PC-9 (cell line): ENCODE measurements at regions of chr2 and their contacts with region 1.

Region 1: DNA sequence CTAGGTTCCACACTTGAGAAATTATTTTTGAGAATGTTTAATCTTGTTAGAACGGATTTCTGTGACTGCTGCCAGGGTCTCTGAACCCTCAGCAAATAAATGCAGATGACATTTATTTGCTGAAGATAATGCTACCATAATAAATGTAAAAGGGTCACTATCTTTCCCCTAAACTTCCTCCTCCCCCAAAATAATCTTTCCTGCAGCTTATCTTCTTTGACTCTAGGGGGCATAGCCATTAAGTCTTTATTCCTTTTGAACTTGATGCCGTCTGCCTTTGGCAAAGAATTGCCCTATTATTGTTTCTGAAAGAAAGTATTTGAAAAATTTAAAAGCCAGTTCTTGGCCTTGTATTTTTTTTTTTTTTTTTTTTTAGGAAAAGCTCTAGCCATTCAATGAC is 63.6 kb upstream of the ACSL3 start:
- DNase-seq: peak in 1 of 2 experiments; percentile 68
- H3K4me3 ChIP-seq: no peak overlapping the region
- H3K27ac ChIP-seq: no peak overlapping the region
- H3K4me1 ChIP-seq: peaks cover 18% of the 10 kb centered on the region
- H3K27me3 ChIP-seq: no peaks in the 10 kb centered on the region
- CTCF ChIP-seq: peak; percentile 74

Region 2: DNA sequence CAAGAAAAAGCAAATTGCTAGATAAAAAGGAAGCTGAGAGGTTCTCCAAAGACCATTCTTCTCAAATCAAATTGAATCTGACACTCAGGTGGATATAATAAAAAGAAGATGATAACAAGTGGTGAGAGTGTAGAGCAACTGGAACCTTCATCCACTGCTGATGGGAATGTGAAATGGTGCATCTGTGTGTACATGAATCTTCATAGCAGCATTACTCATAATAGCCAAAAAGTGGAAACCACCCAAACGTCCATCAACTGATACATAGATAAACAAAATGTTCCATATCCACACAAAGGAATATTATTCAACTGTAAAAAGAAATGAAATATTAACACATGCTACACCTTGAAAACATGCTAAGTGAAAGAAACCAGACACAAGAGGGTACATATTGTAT is 868.0 kb before region 1 on chr2:
- CTCF ChIA-PET with region 1: no interaction called
- POLR2A ChIA-PET with region 1: no interaction called
- intact Hi-C with region 1: no loop called
- DNase-seq: no peak
- H3K4me3 ChIP-seq: no peak overlapping the region
- H3K27ac ChIP-seq: no peak overlapping the region
- H3K4me1 ChIP-seq: 0 out of 2 replicates have a peak, but pooled peaks cover 7% of the 10 kb centered on the region
- H3K27me3 ChIP-seq: no peaks in the 10 kb centered on the region
- CTCF ChIP-seq: no peak

Region 3: GRCh38 chr2:222753251-222753824 is 43.9 kb before region 1 on chr2:
- CTCF ChIA-PET with region 1: interaction called, 9 read pairs
- POLR2A ChIA-PET with region 1: interaction called, 12 read pairs
- intact Hi-C with region 1: no loop called
- DNase-seq: no peak
- H3K4me3 ChIP-seq: no peak overlapping the region
- H3K27ac ChIP-seq: no peak overlapping the region
- H3K4me1 ChIP-seq: peaks cover 28% of the 10 kb centered on the region
- H3K27me3 ChIP-seq: no peaks in the 10 kb centered on the region
- CTCF ChIP-seq: no peak

Region 4: DNA sequence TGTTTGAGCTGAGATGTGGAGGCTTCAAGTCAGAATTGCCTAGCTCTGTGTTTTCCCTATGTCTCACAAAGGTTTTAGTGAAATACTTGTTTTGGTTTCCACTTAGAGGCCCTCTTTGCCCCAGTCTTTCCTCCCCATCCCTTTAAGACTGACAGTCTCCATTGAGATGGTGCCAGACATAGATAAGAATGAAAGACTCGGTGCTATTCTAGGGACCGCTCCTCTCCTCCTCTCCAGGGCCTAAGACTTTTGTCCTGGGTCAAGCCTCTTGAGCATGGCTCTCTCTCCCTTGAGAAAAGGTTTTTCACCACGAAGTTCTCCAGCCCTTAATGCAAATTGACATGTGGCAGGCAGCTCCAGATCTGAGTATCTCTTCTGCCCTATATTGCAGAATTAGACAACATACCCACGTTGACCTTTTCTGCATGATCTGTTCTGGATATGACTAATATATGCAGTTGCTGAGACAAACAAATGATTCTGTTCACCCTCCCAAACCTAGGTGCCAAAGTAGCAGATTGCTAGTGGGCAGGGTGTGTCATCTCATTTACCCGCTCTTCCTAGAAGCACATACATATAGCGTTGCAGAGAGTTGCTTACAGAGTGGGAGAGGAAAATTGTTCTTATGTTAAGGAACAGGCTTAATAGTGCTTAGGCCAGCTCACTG is 16.0 kb after region 1 on chr2:
- CTCF ChIA-PET with region 1: interaction called, 10 read pairs
- POLR2A ChIA-PET with region 1: no interaction called
- intact Hi-C with region 1: no loop called
- DNase-seq: peak in 1 of 2 experiments; percentile 89
- H3K4me3 ChIP-seq: no peak overlapping the region
- H3K27ac ChIP-seq: 0 out of 2 replicates have a peak overlapping the region, but pooled peaks have one; percentile 2
- H3K4me1 ChIP-seq: peaks cover 20% of the 10 kb centered on the region
- H3K27me3 ChIP-seq: no peaks in the 10 kb centered on the region
- CTCF ChIP-seq: no peak

Region 5: GRCh38 chr2:222884114-222884771 is 87.0 kb after region 1 on chr2:
- CTCF ChIA-PET with region 1: no interaction called
- POLR2A ChIA-PET with region 1: interaction called, 9 read pairs
- intact Hi-C with region 1: loop called (anchors 2 kb)
- DNase-seq: no peak
- H3K4me3 ChIP-seq: no peak overlapping the region
- H3K27ac ChIP-seq: peak overlapping the region; percentile 1; the same call in 1 of the 2 replicates
- H3K4me1 ChIP-seq: peaks cover 68% of the 10 kb centered on the region
- H3K27me3 ChIP-seq: no peaks in the 10 kb centered on the region
- CTCF ChIP-seq: no peak

Region 6: DNA sequence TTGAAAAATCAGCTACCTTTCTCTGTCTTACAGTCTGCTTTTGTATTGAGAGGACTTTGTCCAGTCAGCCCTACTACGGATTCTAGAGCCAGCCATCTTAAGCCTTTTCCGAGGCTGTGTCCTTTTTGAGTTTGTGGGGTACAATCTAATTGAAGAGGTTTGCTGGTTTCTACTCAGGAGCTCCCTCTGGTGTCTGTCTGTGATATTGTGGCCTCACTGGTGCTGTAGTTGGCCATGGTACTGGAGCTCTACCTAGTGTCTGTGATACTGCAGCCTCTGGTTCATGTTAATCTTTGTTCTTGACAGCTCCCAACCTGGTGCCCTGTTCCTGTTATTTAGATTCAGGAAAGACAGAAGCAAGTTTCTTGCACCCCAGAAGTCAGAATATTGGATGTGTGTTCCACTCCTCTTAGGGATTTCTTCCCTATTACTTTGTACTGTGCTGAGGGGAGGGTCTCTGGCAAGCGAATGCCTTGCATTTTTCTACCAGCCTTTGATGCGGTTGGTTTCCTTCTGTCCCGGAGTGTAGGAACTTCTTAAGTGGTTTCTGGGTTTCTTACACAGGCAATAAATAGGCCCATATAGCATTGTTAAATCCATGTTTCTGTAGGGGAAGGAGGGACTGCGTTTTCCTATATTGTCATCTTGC is 142.1 kb after region 1 on chr2:
- CTCF ChIA-PET with region 1: interaction called, 15 read pairs
- POLR2A ChIA-PET with region 1: no interaction called
- intact Hi-C with region 1: no loop called
- DNase-seq: peak; percentile 69 to 81
- H3K4me3 ChIP-seq: no peak overlapping the region
- H3K27ac ChIP-seq: peak overlapping the region; percentile 0; the same call in 1 of the 2 replicates
- H3K4me1 ChIP-seq: peaks cover 33% of the 10 kb centered on the region
- H3K27me3 ChIP-seq: no peaks in the 10 kb centered on the region
- CTCF ChIP-seq: peak; percentile 99

Region 7: DNA sequence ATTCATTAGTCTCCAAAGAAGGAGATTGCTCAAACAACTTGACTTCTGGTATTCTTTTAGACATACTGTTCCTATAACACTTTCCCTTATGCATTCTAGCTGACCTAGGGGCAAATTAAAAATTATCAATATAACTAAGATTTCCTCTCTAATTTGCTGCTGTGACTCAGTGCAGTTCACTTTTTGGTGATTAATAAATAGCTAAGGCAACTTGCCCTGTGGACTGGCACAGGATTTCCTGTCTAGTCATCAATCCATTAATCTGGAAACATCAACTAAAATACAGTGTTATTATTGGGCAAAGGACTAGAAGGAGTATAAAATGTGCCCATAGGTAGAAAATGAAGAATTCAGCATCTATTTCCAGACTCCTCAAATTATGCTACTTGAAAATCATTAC is 1325.3 kb after region 1 on chr2:
- CTCF ChIA-PET with region 1: no interaction called
- POLR2A ChIA-PET with region 1: no interaction called
- intact Hi-C with region 1: no loop called
- DNase-seq: no peak
- H3K4me3 ChIP-seq: no peak overlapping the region
- H3K27ac ChIP-seq: no peak overlapping the region
- H3K4me1 ChIP-seq: no peaks in the 10 kb centered on the region
- H3K27me3 ChIP-seq: no peaks in the 10 kb centered on the region
- CTCF ChIP-seq: no peak